ENCODE measurements at regions of chr3 and their contacts with region 1.

Region 1: DNA sequence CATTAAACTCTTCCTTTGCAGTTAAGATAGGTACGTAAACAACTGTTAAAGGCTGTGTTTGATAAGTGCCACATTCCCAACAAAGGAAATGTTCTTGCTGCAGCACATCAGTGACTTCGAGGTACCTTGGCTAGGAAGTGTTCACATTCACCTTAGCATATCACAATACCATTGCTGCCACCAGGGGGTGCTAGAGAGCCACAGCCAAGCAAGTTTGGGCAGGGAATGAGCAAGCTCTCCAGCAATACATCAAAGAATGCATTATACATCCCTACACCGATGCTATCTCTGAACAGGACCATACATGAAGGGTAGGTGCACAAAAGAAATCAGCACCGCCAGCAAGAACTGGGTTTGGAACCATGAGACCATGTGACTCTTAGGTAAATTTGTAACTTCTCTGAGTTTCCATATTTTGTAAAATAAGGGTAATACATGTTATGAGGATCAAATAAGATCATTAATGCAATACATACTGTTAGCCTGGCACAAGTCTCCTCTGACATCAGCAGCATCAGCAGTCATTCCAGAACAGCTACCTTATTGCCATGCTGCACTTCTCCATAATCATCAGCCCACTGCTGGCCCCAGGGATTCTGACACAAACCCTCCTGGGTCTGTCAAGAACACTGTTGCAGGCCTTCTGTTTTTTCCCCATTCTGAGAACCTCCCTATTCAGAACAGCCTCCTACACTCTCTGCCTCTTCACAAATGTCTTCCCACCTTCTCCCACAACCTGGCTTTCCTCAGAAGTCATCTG is 37.6 kb downstream of the RYK start:
- DNase-seq: peak; percentile 85
- H3K4me3 ChIP-seq: no peak overlapping the region
- H3K27ac ChIP-seq: no peak overlapping the region
- H3K4me1 ChIP-seq: no peaks in the 10 kb centered on the region
- H3K27me3 ChIP-seq: no peaks in the 10 kb centered on the region
- CTCF ChIP-seq: peak; percentile 91 to 100 (median 94)
- POLR2A ChIP-seq: no peak

Region 2: GRCh38 chr3:133821767-133822638 is 391.1 kb before region 1 on chr3:
- intact Hi-C with region 1: loop called (anchors 10 kb)
- DNase-seq: no peak
- H3K4me3 ChIP-seq: no peak overlapping the region
- H3K27ac ChIP-seq: no peak overlapping the region
- H3K4me1 ChIP-seq: no peaks in the 10 kb centered on the region
- H3K27me3 ChIP-seq: no peaks in the 10 kb centered on the region
- CTCF ChIP-seq: no peak
- POLR2A ChIP-seq: no peak

Region 3: GRCh38 chr3:134299185-134299887 is 86.2 kb after region 1 on chr3:
- intact Hi-C with region 1: loop called (anchors 2 kb)
- DNase-seq: no peak
- H3K4me3 ChIP-seq: no peak overlapping the region
- H3K27ac ChIP-seq: no peak overlapping the region
- H3K4me1 ChIP-seq: no peaks in the 10 kb centered on the region
- H3K27me3 ChIP-seq: no peaks in the 10 kb centered on the region
- CTCF ChIP-seq: peak in 3 of 4 experiments; percentile 39 to 64 (median 56)
- POLR2A ChIP-seq: no peak

Region 4: GRCh38 chr3:134373994-134374790 is 161.1 kb after region 1 on chr3 and contains the start of gene AMOTL2:
- intact Hi-C with region 1: loop called (anchors 5 kb)
- DNase-seq: peak; percentile 89
- H3K4me3 ChIP-seq: peak within 1 kb of the TSS; percentile 69 to 73
- H3K27ac ChIP-seq: peak within 1 kb of the TSS; percentile 97 to 99
- H3K4me1 ChIP-seq: peaks cover 21% of the 10 kb centered on the region
- H3K27me3 ChIP-seq: no peaks in the 10 kb centered on the region
- CTCF ChIP-seq: no peak
- POLR2A ChIP-seq: peak; percentile 78
- total RNA-seq, gene AMOTL2: 86.1 to 92.8 TPM

Region 5: GRCh38 chr3:134485718-134486576 is 272.9 kb after region 1 on chr3 and contains the starts of genes ANAPC13 and CEP63:
- intact Hi-C with region 1: loop called (anchors 5 kb)
- DNase-seq: peak; percentile 95
- H3K4me3 ChIP-seq: peak within 1 kb of the TSS; percentile 59 to 89
- H3K27ac ChIP-seq: peak within 1 kb of the TSS; percentile 86 to 96
- H3K4me1 ChIP-seq: peaks cover 9% of the 10 kb centered on the region
- H3K27me3 ChIP-seq: no peaks in the 10 kb centered on the region
- CTCF ChIP-seq: peak in 2 of 4 experiments; percentile 13 to 25
- POLR2A ChIP-seq: no peak
- total RNA-seq, gene ANAPC13: 40.2 to 83.2 TPM
- total RNA-seq, gene CEP63: 35.2 to 60.1 TPM

Measured in prostate gland (tissue), 2 donors.